GM10248 (cell line): ENCODE measurements at regions of chr11 and their contacts with region 1.

Region 1: GRCh38 chr11:47850337-47850736 is 2.2 kb upstream of the NUP160 start:
- DNase-seq: peak; percentile 39
- CTCF ChIP-seq: no peak

Region 2: GRCh38 chr11:47861492-47862126 is 11.3 kb after region 1 on chr11:
- CTCF ChIA-PET with region 1: interaction called, 16 read pairs
- POLR2A ChIA-PET with region 1: no interaction called
- DNase-seq: no peak
- CTCF ChIP-seq: no peak

Region 3: DNA sequence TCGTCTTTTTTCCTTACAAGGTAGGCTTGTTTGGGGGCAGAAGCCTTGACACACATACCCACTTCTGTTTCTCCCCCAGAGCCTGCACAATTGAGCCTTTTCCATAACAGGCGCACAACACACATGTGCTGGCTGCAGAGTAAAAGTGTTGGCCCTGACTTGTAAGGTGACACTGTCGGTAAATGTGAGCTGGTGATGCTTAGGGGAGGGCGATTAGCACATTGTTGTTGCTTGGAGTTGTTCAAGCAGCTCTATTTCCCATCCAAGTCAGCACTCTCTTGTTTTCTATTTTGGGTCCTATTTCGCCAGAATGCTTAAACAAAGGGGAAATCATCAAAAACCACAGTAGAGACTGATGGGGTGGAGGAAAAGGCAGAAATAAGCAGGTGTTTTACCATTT is 78.1 kb after region 1 on chr11:
- CTCF ChIA-PET with region 1: no interaction called
- POLR2A ChIA-PET with region 1: no interaction called
- DNase-seq: no peak
- CTCF ChIP-seq: no peak